PC-9 (cell line): ENCODE measurements at regions of chr10 and their contacts with region 1.

Region 1: DNA sequence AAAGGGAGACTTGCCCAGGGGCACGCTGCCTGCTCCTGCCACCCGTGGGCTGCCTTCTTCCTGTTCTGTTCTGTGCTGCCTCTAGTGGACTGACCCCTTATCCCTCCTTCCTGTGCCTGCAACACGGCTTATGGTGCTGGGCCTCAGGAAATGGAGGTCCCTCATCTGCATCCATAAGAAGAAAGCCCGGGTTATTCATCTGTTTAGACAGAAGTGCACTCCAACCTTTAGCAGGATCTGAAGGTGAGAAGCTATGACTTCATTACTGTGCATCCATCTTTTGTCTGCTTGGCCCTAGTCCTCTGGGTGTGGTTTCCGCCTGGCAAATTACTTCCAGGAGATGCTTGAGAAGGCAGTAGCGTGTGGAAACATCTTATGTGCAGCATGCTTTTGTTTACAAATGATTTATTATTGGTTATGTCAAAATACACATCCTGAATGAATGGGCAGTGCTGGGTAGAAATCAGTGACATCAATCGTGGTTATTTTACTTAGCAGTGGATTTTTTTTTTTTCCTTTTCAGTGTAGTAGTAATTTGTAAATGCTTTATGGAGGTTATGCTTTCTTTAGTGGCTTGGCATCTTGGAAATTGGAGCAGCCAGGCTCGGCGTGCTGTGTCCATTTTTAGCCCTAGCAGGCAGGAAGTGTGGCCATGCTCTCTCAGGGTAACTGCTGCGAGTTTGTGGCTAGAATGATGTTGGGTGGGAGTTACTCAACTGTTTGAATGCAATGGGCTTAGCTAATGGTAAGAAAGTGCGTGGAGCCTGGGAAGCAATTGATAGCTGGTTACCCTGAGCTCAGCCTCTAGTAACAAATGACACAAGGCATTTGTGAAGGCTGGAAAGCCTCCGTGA is 12.7 kb downstream of the PTPRE start:
- DNase-seq: peak in 1 of 2 experiments; percentile 65
- H3K4me3 ChIP-seq: no peak overlapping the region
- H3K27ac ChIP-seq: no peak overlapping the region
- H3K4me1 ChIP-seq: peaks cover 37% of the 10 kb centered on the region
- H3K27me3 ChIP-seq: no peaks in the 10 kb centered on the region
- CTCF ChIP-seq: no peak

Region 2: DNA sequence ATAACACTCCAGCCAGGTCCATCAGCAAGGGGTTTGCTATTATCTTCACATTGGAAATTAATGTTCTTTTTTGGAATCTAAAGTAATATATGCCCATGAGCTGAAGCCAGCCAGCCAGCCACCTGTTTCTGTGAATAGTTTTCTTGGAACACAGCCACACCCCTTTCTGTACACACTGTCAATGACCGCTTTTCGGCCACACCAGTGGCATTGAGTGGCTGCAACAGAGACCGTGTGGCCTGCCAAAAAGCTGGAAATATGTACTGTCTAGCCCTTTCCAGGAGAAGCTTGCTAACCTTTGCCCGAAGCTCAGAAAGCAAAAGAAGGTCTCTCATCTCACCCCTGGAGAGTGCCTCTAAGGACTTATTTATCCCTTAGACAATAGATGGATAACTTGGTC is 469.0 kb before region 1 on chr10:
- CTCF ChIA-PET with region 1: no interaction called
- POLR2A ChIA-PET with region 1: no interaction called
- intact Hi-C with region 1: no loop called
- DNase-seq: no peak
- H3K4me3 ChIP-seq: no peak overlapping the region
- H3K27ac ChIP-seq: no peak overlapping the region
- H3K4me1 ChIP-seq: no peaks in the 10 kb centered on the region
- H3K27me3 ChIP-seq: no peaks in the 10 kb centered on the region
- CTCF ChIP-seq: no peak

Region 3: DNA sequence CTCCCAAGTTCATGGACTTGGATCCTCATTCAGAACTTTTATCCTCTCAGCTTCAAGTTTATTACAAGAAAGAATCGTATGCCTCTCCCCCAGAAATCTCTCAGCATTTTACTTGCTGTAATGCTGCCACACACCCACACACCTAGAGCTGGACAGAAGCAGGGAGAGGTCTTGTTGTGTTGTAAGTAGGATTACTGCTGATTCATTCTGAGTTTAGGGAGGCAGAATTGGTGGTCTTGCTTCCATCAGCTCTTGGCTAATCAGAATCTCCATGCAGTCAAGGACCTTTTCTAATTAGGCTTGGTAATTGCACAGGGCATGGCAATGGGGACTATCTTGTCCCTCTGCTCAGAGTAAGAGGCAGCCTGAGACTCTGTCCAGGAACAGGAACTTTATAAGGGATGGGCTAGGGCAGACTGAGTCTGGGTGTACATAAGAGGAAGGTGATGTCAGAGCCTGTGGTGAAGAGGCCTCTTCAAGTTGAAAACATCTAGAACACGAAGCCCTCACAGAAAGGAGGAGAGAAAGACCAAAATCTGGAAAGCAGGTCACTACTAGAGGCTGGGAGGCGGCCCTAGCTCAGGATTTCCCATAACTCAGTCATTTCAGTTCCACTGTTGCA is 19.8 kb before region 1 on chr10:
- CTCF ChIA-PET with region 1: no interaction called
- POLR2A ChIA-PET with region 1: no interaction called
- intact Hi-C with region 1: no loop called
- DNase-seq: no peak
- H3K4me3 ChIP-seq: no peak overlapping the region
- H3K27ac ChIP-seq: no peak overlapping the region
- H3K4me1 ChIP-seq: no peaks in the 10 kb centered on the region
- H3K27me3 ChIP-seq: no peaks in the 10 kb centered on the region
- CTCF ChIP-seq: no peak

Region 4: GRCh38 chr10:127937915-127938463 is 18.3 kb after region 1 on chr10:
- CTCF ChIA-PET with region 1: no interaction called
- POLR2A ChIA-PET with region 1: no interaction called
- intact Hi-C with region 1: loop called (anchors 2 kb)
- DNase-seq: no peak
- H3K4me3 ChIP-seq: no peak overlapping the region
- H3K27ac ChIP-seq: no peak overlapping the region
- H3K4me1 ChIP-seq: peaks cover 11% of the 10 kb centered on the region
- H3K27me3 ChIP-seq: no peaks in the 10 kb centered on the region
- CTCF ChIP-seq: no peak

Region 5: GRCh38 chr10:127977357-127978009 is 57.8 kb after region 1 on chr10:
- CTCF ChIA-PET with region 1: no interaction called
- POLR2A ChIA-PET with region 1: no interaction called
- intact Hi-C with region 1: loop called (anchors 2 kb)
- DNase-seq: peak; percentile 55 to 58
- H3K4me3 ChIP-seq: no peak overlapping the region; the same call in 1 of the 2 replicates
- H3K27ac ChIP-seq: peak overlapping the region; percentile 60
- H3K4me1 ChIP-seq: peaks cover 25% of the 10 kb centered on the region
- H3K27me3 ChIP-seq: no peaks in the 10 kb centered on the region
- CTCF ChIP-seq: no peak

Region 6: DNA sequence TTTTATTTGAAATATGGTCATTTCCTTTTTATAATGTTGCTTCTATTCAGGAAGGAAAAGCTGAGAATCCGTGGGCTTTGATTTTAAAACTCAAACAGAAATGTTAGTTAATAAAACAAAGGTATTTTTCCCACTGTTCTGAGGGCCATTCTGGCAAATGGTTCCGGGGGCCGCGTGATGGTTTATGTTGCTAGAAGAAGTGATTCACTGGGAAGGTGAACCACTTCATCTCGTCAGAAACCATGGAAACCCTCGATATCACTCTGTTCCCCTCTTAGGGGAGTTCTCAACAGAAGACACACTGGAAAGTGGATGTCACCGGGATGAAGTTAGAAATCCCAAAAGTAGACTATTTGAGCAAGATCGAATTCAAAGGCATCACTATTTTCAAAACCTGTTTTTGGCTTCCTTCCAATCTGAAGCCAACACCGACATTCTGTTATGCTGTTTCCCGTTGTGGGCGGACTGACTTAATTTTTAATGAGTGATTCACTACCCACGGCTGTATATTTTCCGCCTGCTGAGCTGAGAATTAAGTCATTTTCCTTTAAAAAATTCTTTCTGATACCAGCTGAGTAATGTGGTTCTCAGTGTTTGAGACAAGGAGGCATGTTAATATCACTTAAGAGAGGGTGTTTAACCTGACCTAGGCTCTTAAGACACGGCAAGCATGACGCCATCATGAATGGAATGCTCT is 71.3 kb after region 1 on chr10:
- CTCF ChIA-PET with region 1: no interaction called
- POLR2A ChIA-PET with region 1: no interaction called
- intact Hi-C with region 1: loop called (anchors 5 kb)
- DNase-seq: peak; percentile 25 to 87
- H3K4me3 ChIP-seq: peak overlapping the region; percentile 30; the same call in 1 of the 2 replicates
- H3K27ac ChIP-seq: peak overlapping the region; percentile 90
- H3K4me1 ChIP-seq: peaks cover 44% of the 10 kb centered on the region
- H3K27me3 ChIP-seq: no peaks in the 10 kb centered on the region
- CTCF ChIP-seq: no peak